H1 (cell line): ENCODE measurements at regions of chr3 and their contacts with region 1.

Region 1: DNA sequence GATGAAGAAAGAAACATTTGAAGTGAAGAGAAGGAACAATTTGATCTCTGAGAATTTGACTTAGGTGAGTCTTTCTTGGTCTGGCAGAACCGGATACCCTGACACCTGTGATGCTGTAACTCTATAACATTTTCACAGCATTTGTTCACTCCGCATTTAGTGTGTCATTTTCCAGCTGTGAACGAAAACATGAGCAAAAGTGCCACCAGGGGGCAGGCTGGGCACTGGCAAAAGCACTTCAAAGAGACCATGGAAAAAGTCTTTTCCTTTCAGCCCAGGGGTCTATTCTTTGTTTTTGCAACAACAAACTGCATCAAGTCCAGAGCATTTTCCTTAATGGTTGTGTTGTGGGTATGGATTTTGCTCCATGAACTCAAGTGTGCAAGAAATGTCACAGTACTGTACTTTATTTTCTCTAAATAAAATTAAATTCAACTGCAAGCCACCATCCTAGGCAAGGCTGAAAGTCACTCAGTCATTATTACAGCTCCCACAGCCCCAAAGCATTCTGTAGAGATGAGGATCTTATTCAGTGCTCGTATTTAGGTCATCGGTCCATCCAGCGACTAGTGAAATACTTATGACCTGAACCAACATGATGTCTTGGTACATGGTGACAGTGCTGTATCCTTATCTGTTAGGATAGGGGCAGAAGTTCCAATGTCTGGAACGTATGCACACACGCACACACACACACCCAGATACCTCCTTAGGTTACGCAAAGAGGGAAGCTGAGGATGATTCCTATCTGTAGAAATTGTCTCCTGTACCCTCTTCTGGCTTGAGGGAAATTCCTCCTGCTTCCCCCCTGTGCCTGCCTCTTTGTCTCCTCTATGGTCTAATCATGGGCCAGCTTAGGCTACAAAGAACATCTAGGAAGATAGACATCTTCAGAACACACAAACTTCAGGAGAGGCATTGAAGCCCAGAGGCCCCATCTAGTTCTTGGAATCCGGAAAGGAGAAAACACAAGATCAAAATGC is 125.5 kb downstream of the GADL1 start:
- DNase-seq: peak in 1 of 2 experiments; percentile 85
- H3K4me3 ChIP-seq: no peak overlapping the region
- H3K27ac ChIP-seq: no peak overlapping the region
- H3K4me1 ChIP-seq: no peaks in the 10 kb centered on the region
- H3K27me3 ChIP-seq: no peaks in the 10 kb centered on the region
- CTCF ChIP-seq: peak; percentile 66 to 85 (median 73)
- EP300 ChIP-seq: no peak
- POLR2A ChIP-seq: no peak
- RAD21 ChIP-seq: peak; percentile 75 to 81

Region 2: DNA sequence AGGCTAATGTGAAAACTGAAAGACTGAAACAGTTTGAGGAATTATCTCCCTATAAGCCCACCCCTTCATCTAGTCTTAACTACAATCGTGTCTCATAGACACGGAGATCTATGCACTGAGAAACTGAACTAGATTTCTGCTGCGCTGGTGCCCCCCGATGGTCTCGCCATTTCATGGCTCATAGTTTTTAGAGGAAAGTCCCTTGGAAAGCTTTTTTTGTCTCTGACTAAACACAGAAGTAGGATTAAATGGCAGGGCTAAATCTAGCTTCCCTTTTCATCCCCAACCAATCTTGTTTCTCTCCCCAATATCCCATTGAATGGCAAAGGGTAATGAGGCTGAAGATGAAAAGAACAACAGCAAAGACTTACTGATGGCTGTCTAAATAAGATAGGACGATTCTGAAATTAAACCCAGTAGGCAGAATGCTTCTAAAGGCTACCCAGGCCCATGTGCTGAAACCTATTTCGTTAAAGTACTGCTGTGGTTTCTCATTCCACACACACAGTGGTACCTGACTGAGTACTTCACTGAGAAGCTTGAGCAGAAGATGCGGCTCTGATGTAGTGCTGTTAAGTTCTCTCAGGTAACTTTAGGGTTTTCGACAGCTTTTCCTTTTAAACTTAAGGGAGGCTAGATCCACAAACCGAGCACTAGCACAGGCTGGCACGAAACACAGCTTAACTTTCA is 17.2 kb before region 1 on chr3:
- CTCF ChIA-PET with region 1: interaction called, 52 read pairs
- POLR2A ChIA-PET with region 1: no interaction called
- DNase-seq: peak in 1 of 2 experiments; percentile 63
- H3K4me3 ChIP-seq: no peak overlapping the region; a peak in 1 of 8 replicates
- H3K27ac ChIP-seq: no peak overlapping the region
- H3K4me1 ChIP-seq: peaks cover 0 to 15% (median 1%) of the 10 kb centered on the region in 4 experiments; a peak in 2 of 7 replicates
- H3K27me3 ChIP-seq: no peaks in the 10 kb centered on the region
- CTCF ChIP-seq: peak; percentile 10 to 58 (median 56)
- EP300 ChIP-seq: no peak
- POLR2A ChIP-seq: no peak
- RAD21 ChIP-seq: peak; percentile 77 to 88

Region 3: GRCh38 chr3:30779686-30780287 is 10.8 kb after region 1 on chr3:
- CTCF ChIA-PET with region 1: interaction called, 20 read pairs
- POLR2A ChIA-PET with region 1: no interaction called
- DNase-seq: peak in 1 of 2 experiments; percentile 48
- H3K4me3 ChIP-seq: no peak overlapping the region
- H3K27ac ChIP-seq: no peak overlapping the region
- H3K4me1 ChIP-seq: no peaks in the 10 kb centered on the region
- H3K27me3 ChIP-seq: no peaks in the 10 kb centered on the region
- CTCF ChIP-seq: peak; percentile 2 to 71 (median 66)
- EP300 ChIP-seq: no peak
- POLR2A ChIP-seq: no peak
- RAD21 ChIP-seq: peak; percentile 87 to 89

Region 4: DNA sequence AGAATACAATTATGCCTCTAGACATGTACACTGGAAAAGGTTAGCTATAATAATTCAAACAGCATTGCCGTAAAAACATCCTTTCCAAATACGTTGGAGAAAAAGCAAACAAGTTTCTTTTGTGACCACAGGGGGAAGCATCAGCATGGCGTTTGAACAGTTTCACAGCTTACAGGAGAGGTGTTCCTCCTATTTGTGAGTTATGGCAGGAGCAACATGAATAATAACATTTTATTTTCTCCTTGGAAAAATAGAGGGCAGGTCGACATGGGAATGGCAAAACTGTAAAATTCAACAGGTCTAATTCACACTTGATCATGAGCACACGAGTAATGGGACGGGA is 165.2 kb after region 1 on chr3:
- CTCF ChIA-PET with region 1: interaction called, 13 read pairs
- POLR2A ChIA-PET with region 1: no interaction called
- DNase-seq: peak in 1 of 2 experiments; percentile 5
- H3K4me3 ChIP-seq: no peak overlapping the region
- H3K27ac ChIP-seq: no peak overlapping the region
- H3K4me1 ChIP-seq: no peaks in the 10 kb centered on the region
- H3K27me3 ChIP-seq: no peaks in the 10 kb centered on the region
- CTCF ChIP-seq: peak in 2 of 3 experiments; percentile 34 to 63; a peak in 2 of 4 replicates
- EP300 ChIP-seq: no peak
- POLR2A ChIP-seq: no peak
- RAD21 ChIP-seq: peak; percentile 73 to 76

Region 5: DNA sequence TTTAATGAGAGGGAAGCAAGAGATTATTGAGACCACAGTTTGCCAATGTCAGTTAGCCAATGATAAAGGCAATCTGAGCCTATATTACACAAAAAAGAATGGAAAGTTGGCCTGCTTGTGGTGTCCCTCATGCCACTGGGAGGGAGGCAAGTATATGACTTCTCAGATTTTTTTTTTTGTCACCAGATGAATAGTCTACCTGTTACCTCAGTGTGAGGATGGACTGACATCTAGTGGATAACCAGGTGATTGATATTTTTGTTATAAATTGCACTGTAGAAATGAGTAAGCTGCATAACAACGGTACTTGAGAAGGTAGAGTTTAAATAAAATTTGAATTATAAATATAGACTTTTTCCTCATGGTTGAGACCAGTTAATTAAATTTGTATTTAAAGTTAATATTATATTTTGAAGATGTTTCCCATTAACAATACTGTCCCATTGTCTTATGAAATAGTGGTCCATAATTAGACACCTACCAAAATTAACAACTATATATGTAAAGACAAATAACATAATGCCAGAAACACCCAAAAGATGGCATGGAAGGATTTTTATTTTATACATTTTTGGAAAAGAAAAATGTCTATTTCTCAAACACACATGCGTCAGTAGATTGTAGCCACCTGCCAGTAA is 363.3 kb after region 1 on chr3:
- CTCF ChIA-PET with region 1: interaction called, 19 read pairs
- POLR2A ChIA-PET with region 1: no interaction called
- DNase-seq: no peak
- H3K4me3 ChIP-seq: no peak overlapping the region
- H3K27ac ChIP-seq: no peak overlapping the region
- H3K4me1 ChIP-seq: peaks cover 0 to 2% (median 0%) of the 10 kb centered on the region in 4 experiments; a peak in 1 of 7 replicates
- H3K27me3 ChIP-seq: no peaks in the 10 kb centered on the region
- CTCF ChIP-seq: peak in 2 of 3 experiments; percentile 49 to 50; a peak in 2 of 4 replicates
- EP300 ChIP-seq: no peak
- POLR2A ChIP-seq: no peak
- RAD21 ChIP-seq: peak; percentile 92 to 95